SK-N-SH (cell line): ENCODE measurements at regions of chr11 and their contacts with region 1.

Region 1: GRCh38 chr11:112113539-112114457 is 27.1 kb downstream of the SDHD start:
- DNase-seq: peak; percentile 64
- H3K4me3 ChIP-seq: peak overlapping the region in 1 of 2 experiments; percentile 38; a peak in 1 of 4 replicates
- H3K27ac ChIP-seq: no peak overlapping the region
- H3K4me1 ChIP-seq: peaks cover 0 to 4% of the 10 kb centered on the region in 2 experiments; a peak in 1 of 4 replicates
- H3K27me3 ChIP-seq: no peaks in the 10 kb centered on the region
- CTCF ChIP-seq: peak; percentile 73
- EP300 ChIP-seq: no peak
- RAD21 ChIP-seq: peak; percentile 76

Region 2: GRCh38 chr11:111963931-111964340 is 149.9 kb before region 1 on chr11:
- CTCF ChIA-PET with region 1: no interaction called
- POLR2A ChIA-PET with region 1: no interaction called
- DNase-seq: no peak
- H3K4me3 ChIP-seq: no peak overlapping the region
- H3K27ac ChIP-seq: no peak overlapping the region
- H3K4me1 ChIP-seq: no peaks in the 10 kb centered on the region; a peak in 1 of 4 replicates
- H3K27me3 ChIP-seq: no peaks in the 10 kb centered on the region
- CTCF ChIP-seq: no peak
- EP300 ChIP-seq: no peak
- RAD21 ChIP-seq: no peak

Region 3: DNA sequence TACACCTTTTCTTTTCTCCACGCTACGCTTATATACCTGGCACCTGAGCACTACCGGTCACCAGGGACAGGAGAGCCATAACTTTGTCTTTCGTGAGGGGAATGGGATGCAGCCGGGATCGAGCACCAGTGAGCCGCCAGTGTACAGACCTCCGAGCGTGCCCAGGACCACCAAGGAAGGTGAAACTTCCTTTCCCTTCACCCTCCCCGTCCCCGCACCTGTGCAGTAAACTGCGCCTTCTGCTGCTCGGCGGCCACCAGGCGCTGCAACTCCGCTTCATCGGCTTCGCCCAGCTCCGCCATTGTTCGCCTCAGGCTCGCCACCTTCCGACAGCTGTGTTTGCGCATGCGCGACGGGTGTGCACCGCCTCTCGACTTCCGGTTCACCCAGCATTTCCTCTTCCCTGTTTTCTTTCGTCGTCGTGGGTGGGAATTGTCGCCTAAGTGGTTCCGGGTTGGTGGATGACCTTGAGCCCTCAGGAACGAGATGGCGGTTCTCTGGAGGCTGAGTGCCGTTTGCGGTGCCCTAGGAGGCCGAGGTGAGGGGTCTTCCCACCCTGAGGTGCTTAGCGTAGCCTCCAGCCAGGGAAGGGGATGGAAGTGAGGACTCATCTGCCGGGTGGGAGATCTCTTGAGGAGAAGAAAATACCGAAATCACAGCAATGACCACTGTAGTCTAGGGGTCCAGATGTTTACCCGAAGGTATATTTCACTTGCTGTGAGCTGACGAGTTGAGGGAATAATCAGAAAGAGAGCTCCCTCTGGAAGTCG is 27.2 kb before region 1 on chr11 and contains the starts of genes SDHD and TIMM8B:
- CTCF ChIA-PET with region 1: interaction called, 16 read pairs
- POLR2A ChIA-PET with region 1: no interaction called
- DNase-seq: peak; percentile 91
- H3K4me3 ChIP-seq: peak within 1 kb of the TSS; percentile 72 to 85
- H3K27ac ChIP-seq: peak within 1 kb of the TSS; percentile 48 to 86
- H3K4me1 ChIP-seq: peaks cover 0 to 19% of the 10 kb centered on the region in 2 experiments; a peak in 3 of 4 replicates
- H3K27me3 ChIP-seq: no peaks in the 10 kb centered on the region
- CTCF ChIP-seq: peak; percentile 40
- EP300 ChIP-seq: no peak
- RAD21 ChIP-seq: no peak
- polyA plus RNA-seq, gene SDHD: 169 and 192 TPM in 2 replicates
- polyA plus RNA-seq, gene TIMM8B: 156 and 188 TPM in 2 replicates

Region 4: DNA sequence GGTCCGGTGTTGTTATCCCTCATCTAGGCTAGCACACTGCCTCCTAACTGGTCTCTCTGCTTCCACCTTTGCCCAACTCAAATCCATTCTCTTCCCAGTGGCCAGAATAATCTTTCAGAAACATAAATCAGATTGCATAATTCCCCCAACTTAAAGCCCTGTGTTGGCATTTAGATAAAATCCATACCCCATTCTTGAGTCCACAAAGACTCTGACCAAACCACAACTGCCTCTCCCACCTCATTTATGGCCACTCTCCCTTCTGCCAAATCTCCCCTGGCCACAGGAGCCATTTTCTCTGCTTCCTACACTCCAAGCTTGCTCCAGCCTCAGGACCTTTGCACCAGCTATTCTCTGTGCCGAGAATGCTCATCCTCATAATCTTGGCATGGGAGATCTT is 13.3 kb after region 1 on chr11:
- CTCF ChIA-PET with region 1: interaction called, 23 read pairs
- POLR2A ChIA-PET with region 1: interaction called, 4 read pairs
- DNase-seq: no peak
- H3K4me3 ChIP-seq: no peak overlapping the region
- H3K27ac ChIP-seq: no peak overlapping the region
- H3K4me1 ChIP-seq: peaks cover 5 to 11% of the 10 kb centered on the region in 2 experiments; a peak in 3 of 4 replicates
- H3K27me3 ChIP-seq: no peaks in the 10 kb centered on the region
- CTCF ChIP-seq: no peak
- EP300 ChIP-seq: no peak
- RAD21 ChIP-seq: no peak

Region 5: DNA sequence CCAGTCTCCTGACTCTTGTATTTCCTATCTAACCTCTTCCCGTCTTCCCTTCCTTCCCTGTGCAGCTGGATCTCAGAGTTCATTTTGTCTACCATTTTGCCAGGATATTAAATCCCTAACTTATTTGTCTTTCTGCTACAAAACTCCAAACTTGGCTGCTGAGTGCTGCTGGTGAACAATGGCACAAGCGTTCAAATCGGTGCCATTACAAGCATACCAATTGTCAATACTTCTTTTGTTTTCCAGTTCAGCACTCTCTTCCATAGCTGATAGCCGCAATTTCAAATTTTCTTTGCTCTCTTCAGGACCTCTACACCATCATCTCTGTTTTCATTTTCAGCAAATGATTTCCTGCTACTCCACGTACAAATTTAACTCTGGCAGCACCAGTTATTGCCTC is 36.7 kb after region 1 on chr11:
- CTCF ChIA-PET with region 1: interaction called, 15 read pairs
- POLR2A ChIA-PET with region 1: no interaction called
- DNase-seq: no peak
- H3K4me3 ChIP-seq: no peak overlapping the region
- H3K27ac ChIP-seq: no peak overlapping the region
- H3K4me1 ChIP-seq: no peaks in the 10 kb centered on the region
- H3K27me3 ChIP-seq: no peaks in the 10 kb centered on the region
- CTCF ChIP-seq: no peak
- EP300 ChIP-seq: no peak
- RAD21 ChIP-seq: no peak

Region 6: DNA sequence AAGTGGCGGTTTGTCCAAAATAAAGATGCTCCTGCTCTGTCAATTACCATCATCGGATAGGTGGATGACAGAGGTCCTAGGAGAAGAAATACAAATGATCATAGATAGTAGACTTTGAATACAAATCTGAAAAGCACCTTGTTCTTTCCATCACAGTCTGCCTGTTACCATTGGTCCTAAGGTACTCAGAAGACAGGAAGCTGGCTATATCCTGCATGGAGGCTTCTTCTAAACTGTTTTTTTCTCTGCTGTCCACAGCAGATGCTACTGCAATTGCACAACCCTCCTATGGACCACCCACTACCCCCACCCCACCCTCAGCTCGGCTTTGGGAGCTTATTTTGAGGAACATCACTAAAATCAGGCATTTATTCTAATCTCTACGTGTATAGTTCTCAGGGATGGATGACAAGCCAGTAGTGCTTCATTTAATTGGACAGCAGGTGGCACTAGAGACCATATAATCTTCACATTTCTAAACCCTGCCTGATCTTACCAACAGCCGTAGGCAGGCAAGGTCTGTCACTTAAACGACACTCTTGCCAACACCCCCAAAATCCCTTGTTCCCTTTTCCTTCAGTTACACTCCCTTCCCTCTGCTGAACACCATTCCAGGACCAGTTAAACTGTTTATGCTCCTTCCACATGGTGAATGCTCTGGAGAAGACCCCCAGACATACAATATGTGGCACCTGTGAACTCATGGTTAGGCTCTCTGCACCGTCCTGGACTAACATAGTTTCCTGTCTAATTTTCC is 105.9 kb after region 1 on chr11:
- CTCF ChIA-PET with region 1: interaction called, 25 read pairs
- POLR2A ChIA-PET with region 1: no interaction called
- DNase-seq: peak; percentile 72
- H3K4me3 ChIP-seq: no peak overlapping the region; a peak in 1 of 4 replicates
- H3K27ac ChIP-seq: no peak overlapping the region
- H3K4me1 ChIP-seq: peaks cover 3 to 21% of the 10 kb centered on the region in 2 experiments
- H3K27me3 ChIP-seq: no peaks in the 10 kb centered on the region
- CTCF ChIP-seq: peak; percentile 78
- EP300 ChIP-seq: no peak
- RAD21 ChIP-seq: peak; percentile 95

Region 7: GRCh38 chr11:112355726-112356125 is 241.9 kb after region 1 on chr11:
- CTCF ChIA-PET with region 1: no interaction called
- POLR2A ChIA-PET with region 1: no interaction called
- DNase-seq: peak; percentile 46
- H3K4me3 ChIP-seq: no peak overlapping the region
- H3K27ac ChIP-seq: no peak overlapping the region
- H3K4me1 ChIP-seq: peaks cover 0 to 7% of the 10 kb centered on the region in 2 experiments; a peak in 1 of 4 replicates
- H3K27me3 ChIP-seq: no peaks in the 10 kb centered on the region
- CTCF ChIP-seq: peak; percentile 36
- EP300 ChIP-seq: no peak
- RAD21 ChIP-seq: peak; percentile 50